H1 (cell line): ENCODE measurements at regions of chr19 and their contacts with region 1.

Region 1: GRCh38 chr19:16778796-16779411 is 50.3 kb upstream of the SIN3B start:
- DNase-seq: peak; percentile 44 to 80
- H3K4me3 ChIP-seq: no peak overlapping the region
- H3K27ac ChIP-seq: no peak overlapping the region
- H3K4me1 ChIP-seq: no peaks in the 10 kb centered on the region
- H3K27me3 ChIP-seq: no peaks in the 10 kb centered on the region
- CTCF ChIP-seq: peak; percentile 85 to 96 (median 94)
- EP300 ChIP-seq: no peak
- POLR2A ChIP-seq: no peak
- RAD21 ChIP-seq: peak; percentile 94 to 95

Region 2: DNA sequence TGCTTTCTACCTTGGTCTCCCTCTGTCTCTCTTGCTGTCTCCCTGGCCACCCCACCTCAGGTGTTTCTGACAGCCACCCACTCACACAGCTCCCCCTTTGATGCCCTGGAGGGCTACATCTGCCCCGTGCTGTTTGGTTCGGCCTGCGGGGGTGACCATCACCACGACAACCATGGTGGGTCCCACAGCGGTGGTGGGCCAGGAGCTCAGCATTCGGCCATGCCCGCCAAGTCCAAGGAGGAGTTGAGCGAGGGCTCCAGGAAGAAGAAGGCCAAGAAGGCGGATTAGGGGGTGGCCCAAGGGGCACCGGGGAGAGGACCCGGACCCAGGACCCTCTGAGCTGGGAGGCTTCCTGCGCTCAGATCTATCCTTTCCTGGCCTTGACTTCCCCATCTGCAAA is 90.8 kb before region 1 on chr19:
- CTCF ChIA-PET with region 1: no interaction called
- POLR2A ChIA-PET with region 1: no interaction called
- DNase-seq: no peak
- H3K4me3 ChIP-seq: no peak overlapping the region
- H3K27ac ChIP-seq: no peak overlapping the region
- H3K4me1 ChIP-seq: no peaks in the 10 kb centered on the region
- H3K27me3 ChIP-seq: no peaks in the 10 kb centered on the region
- CTCF ChIP-seq: no peak
- EP300 ChIP-seq: no peak
- POLR2A ChIP-seq: no peak
- RAD21 ChIP-seq: no peak

Region 3: GRCh38 chr19:16756487-16757048 is 22.3 kb before region 1 on chr19:
- CTCF ChIA-PET with region 1: no interaction called
- POLR2A ChIA-PET with region 1: no interaction called
- DNase-seq: no peak
- H3K4me3 ChIP-seq: no peak overlapping the region
- H3K27ac ChIP-seq: no peak overlapping the region
- H3K4me1 ChIP-seq: no peaks in the 10 kb centered on the region
- H3K27me3 ChIP-seq: no peaks in the 10 kb centered on the region; a peak in 1 of 7 replicates
- CTCF ChIP-seq: no peak
- EP300 ChIP-seq: no peak
- POLR2A ChIP-seq: no peak
- RAD21 ChIP-seq: no peak

Region 4: GRCh38 chr19:16804176-16804575 is 25.3 kb after region 1 on chr19:
- CTCF ChIA-PET with region 1: interaction called, 11 read pairs
- POLR2A ChIA-PET with region 1: interaction called, 4 read pairs
- DNase-seq: no peak
- H3K4me3 ChIP-seq: no peak overlapping the region
- H3K27ac ChIP-seq: no peak overlapping the region
- H3K4me1 ChIP-seq: peaks cover 0 to 4% (median 0%) of the 10 kb centered on the region in 4 experiments; a peak in 3 of 7 replicates
- H3K27me3 ChIP-seq: no peaks in the 10 kb centered on the region
- CTCF ChIP-seq: no peak
- EP300 ChIP-seq: no peak
- POLR2A ChIP-seq: no peak
- RAD21 ChIP-seq: no peak

Region 5: GRCh38 chr19:16836115-16837034 is 57.5 kb after region 1 on chr19:
- CTCF ChIA-PET with region 1: interaction called, 54 read pairs
- POLR2A ChIA-PET with region 1: interaction called, 4 read pairs
- DNase-seq: no peak
- H3K4me3 ChIP-seq: no peak overlapping the region
- H3K27ac ChIP-seq: no peak overlapping the region
- H3K4me1 ChIP-seq: no peaks in the 10 kb centered on the region
- H3K27me3 ChIP-seq: no peaks in the 10 kb centered on the region
- CTCF ChIP-seq: peak; percentile 38 to 58 (median 44)
- EP300 ChIP-seq: no peak
- POLR2A ChIP-seq: no peak
- RAD21 ChIP-seq: peak; percentile 62 to 75

Region 6: DNA sequence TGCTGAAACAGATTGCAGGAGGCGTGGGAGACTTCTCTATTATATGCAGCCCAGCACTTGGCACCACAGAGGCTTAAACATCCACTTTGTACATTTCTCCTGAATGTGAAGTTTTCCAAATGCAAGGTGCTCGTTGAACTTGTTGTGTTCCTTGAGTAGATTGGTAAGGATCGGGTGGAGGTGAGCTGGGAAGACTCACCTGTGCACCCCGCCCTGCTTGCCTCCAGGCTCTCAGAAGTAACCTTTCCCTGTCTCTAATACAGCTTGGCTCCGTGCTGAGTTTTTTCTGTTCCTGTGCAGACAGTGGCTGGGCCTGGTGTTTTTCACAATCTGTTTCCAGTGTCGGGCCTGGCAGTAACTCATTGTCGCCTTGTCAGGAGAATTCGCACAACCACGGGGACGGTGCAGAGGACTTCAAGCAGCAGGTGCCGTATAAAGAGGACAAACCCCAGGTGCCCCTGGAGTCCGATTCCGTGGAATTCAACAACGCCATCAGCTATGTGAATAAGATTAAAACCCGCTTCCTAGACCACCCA is 62.6 kb after region 1 on chr19:
- CTCF ChIA-PET with region 1: interaction called, 54 read pairs
- POLR2A ChIA-PET with region 1: interaction called, 3 read pairs
- DNase-seq: no peak
- H3K4me3 ChIP-seq: no peak overlapping the region
- H3K27ac ChIP-seq: no peak overlapping the region
- H3K4me1 ChIP-seq: peaks cover 0 to 2% (median under 1%) of the 10 kb centered on the region in 4 experiments; a peak in 1 of 7 replicates
- H3K27me3 ChIP-seq: no peaks in the 10 kb centered on the region
- CTCF ChIP-seq: no peak
- EP300 ChIP-seq: no peak
- POLR2A ChIP-seq: no peak
- RAD21 ChIP-seq: no peak